HCT116 (cell line): ENCODE measurements at regions of chr19 and their contacts with region 1.

Region 1: DNA sequence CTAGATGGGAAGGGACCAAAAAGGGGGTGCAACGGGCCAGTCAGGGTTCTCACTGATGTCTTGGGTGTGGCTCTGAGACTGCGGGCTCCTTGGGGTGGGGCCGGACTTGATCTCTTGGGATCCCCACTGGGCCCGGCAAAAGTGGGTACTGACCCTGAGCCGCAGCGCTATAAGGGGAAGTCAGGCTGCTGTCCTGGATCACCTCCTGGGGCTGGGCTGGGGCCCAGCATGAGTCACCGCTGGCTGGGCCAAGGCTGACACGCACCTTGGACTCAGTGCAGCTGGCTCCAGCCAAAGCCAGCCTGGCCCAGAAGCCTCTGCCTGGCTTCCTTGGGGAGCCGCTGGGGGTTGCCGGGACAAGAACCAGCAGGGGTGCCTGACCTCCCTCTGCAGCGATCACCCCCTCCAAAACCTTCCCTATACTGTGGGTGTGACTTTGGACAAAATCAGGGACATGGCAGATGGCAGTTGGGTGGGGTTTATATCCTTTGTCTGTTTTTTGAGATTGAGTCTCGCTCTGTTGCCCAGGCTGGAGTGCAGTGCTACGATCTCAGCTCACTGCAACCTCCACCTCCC is 617 bp upstream of the IQCN start:
- DNase-seq: no peak
- ATAC-seq: peak; percentile 82
- H3K4me3 ChIP-seq: peak overlapping the region; percentile 1 to 47; a peak in 3 of 4 replicates
- H3K27ac ChIP-seq: peak overlapping the region; percentile 92
- H3K4me1 ChIP-seq: peaks cover 57 to 72% of the 10 kb centered on the region in 2 experiments
- H3K27me3 ChIP-seq: no peaks in the 10 kb centered on the region
- CTCF ChIP-seq: no peak
- POLR2A ChIP-seq: no peak
- RAD21 ChIP-seq: no peak

Region 2: DNA sequence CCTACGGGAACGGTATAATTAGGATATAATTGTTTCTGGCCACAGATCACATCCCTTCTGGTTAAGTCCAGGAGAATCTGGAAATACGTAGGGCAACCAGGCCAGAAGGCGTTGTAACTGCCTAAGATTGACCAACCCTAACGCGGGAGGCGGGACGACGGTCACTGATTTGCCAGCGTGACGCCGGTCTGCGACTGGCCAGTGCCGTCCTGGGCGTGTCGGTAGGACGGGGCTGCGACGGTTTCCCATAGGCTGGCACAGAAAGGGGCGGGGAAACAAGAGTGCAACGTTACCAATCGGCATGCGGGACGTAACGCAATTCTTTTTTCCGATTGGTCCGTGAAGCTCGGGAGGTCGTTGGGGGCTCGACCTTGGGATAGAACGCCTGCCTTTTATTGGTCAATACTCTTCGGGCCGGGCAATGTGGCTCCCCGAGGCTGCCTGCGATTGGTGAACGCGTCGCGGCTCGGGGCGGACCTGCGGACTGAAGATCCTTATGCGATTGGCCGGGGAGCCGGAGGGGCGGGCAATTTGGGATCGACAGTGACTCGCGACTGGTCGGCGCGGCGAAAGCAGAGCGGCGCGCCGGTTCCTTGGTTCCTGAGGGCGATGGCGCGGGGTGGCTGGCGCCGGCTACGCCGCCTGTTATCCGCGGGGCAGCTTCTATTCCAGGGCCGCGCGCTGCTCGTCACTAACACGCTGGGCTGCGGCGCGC is 82.0 kb before region 1 on chr19 and contains the start of gene MPV17L2:
- CTCF ChIA-PET with region 1: interaction called, 5 read pairs
- POLR2A ChIA-PET with region 1: interaction called, 27 read pairs
- RAD21 ChIA-PET with region 1: no interaction called
- intact Hi-C with region 1: loop called (anchors 1 kb)
- DNase-seq: peak; percentile 100
- ATAC-seq: peak; percentile 88
- H3K4me3 ChIP-seq: peak within 1 kb of the TSS; percentile 90 to 93
- H3K27ac ChIP-seq: peak within 1 kb of the TSS; percentile 77
- H3K4me1 ChIP-seq: peaks cover 14 to 26% of the 10 kb centered on the region in 2 experiments
- H3K27me3 ChIP-seq: no peaks in the 10 kb centered on the region
- CTCF ChIP-seq: no peak
- POLR2A ChIP-seq: peak; percentile 92
- RAD21 ChIP-seq: no peak
- total RNA-seq, gene MPV17L2: 18.7 TPM